ENCODE measurements at regions of chr13 and their contacts with region 1.

Region 1: GRCh38 chr13:91331047-91331915 is 16.2 kb upstream of the MIR17HG start:
- DNase-seq: no peak
- ATAC-seq: no peak
- H3K4me3 ChIP-seq: no peak overlapping the region
- H3K27ac ChIP-seq: no peak overlapping the region
- H3K4me1 ChIP-seq: no peaks in the 10 kb centered on the region
- H3K27me3 ChIP-seq: peaks cover 0 to 12% (median 0%) of the 10 kb centered on the region in 7 donors
- CTCF ChIP-seq: no peak

Region 2: GRCh38 chr13:91196958-91197357 is 134.3 kb before region 1 on chr13:
- intact Hi-C with region 1: no loop called
- DNase-seq: no peak
- ATAC-seq: no peak
- H3K4me3 ChIP-seq: no peak overlapping the region
- H3K27ac ChIP-seq: no peak overlapping the region
- H3K4me1 ChIP-seq: no peaks in the 10 kb centered on the region
- H3K27me3 ChIP-seq: no peaks in the 10 kb centered on the region
- CTCF ChIP-seq: no peak

Region 3: DNA sequence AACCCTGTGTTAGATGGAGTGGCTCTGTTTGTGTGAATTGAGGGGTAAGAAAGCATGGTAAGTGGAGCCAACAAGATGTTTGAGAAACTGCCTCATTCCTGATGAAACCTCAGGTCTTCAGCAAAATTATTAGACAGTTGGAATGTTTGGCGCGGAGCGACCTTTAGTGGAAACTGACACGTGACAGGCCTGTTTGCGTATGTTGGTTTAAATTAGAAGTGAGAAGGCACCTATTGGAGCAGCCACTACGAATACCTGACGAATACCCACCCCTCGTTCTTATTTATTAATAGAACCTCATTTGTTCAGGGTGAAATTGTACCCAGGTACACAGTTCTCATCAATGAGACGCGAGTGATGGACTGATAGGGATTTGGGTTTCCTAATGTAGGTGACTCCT is 46.9 kb before region 1 on chr13:
- intact Hi-C with region 1: loop called in 1 of 10 experiments (anchors 1 kb)
- DNase-seq: no peak
- ATAC-seq: no peak
- H3K4me3 ChIP-seq: no peak overlapping the region
- H3K27ac ChIP-seq: no peak overlapping the region
- H3K4me1 ChIP-seq: no peaks in the 10 kb centered on the region
- H3K27me3 ChIP-seq: no peaks in the 10 kb centered on the region
- CTCF ChIP-seq: no peak